ENCODE measurements at regions of chr18 and their contacts with region 1.

Region 1: GRCh38 chr18:10182009-10182624 is 268.3 kb downstream of the VAPA start:
- DNase-seq: no peak
- ATAC-seq: no peak
- H3K4me3 ChIP-seq: no peak overlapping the region
- H3K4me3 Mint-ChIP-seq: no peak overlapping the region
- H3K27ac ChIP-seq: no peak overlapping the region
- H3K27ac Mint-ChIP-seq: no peak overlapping the region
- H3K4me1 ChIP-seq: no peaks in the 10 kb centered on the region
- H3K4me1 Mint-ChIP-seq: peaks cover 8% of the 10 kb centered on the region
- H3K27me3 ChIP-seq: no peaks in the 10 kb centered on the region
- H3K27me3 Mint-ChIP-seq: no peaks in the 10 kb centered on the region
- CTCF ChIP-seq: no peak

Region 2: GRCh38 chr18:10169064-10169562 is 13.0 kb before region 1 on chr18:
- CTCF ChIA-PET with region 1: no interaction called
- POLR2A ChIA-PET with region 1: no interaction called
- intact Hi-C with region 1: no loop called
- DNase-seq: no peak
- ATAC-seq: no peak
- H3K4me3 ChIP-seq: no peak overlapping the region
- H3K4me3 Mint-ChIP-seq: no peak overlapping the region
- H3K27ac ChIP-seq: no peak overlapping the region
- H3K27ac Mint-ChIP-seq: no peak overlapping the region
- H3K4me1 ChIP-seq: no peaks in the 10 kb centered on the region
- H3K4me1 Mint-ChIP-seq: no peaks in the 10 kb centered on the region
- H3K27me3 ChIP-seq: no peaks in the 10 kb centered on the region
- H3K27me3 Mint-ChIP-seq: no peaks in the 10 kb centered on the region
- CTCF ChIP-seq: no peak

Region 3: GRCh38 chr18:10500038-10500437 is 317.9 kb after region 1 on chr18:
- CTCF ChIA-PET with region 1: no interaction called
- POLR2A ChIA-PET with region 1: no interaction called
- intact Hi-C with region 1: loop called in 1 of 2 experiments (anchors 5 kb)
- DNase-seq: no peak
- ATAC-seq: no peak
- H3K4me3 ChIP-seq: no peak overlapping the region
- H3K4me3 Mint-ChIP-seq: no peak overlapping the region
- H3K27ac ChIP-seq: no peak overlapping the region
- H3K27ac Mint-ChIP-seq: no peak overlapping the region
- H3K4me1 ChIP-seq: no peaks in the 10 kb centered on the region
- H3K4me1 Mint-ChIP-seq: peaks cover 8% of the 10 kb centered on the region
- H3K27me3 ChIP-seq: no peaks in the 10 kb centered on the region
- H3K27me3 Mint-ChIP-seq: peaks cover 6% of the 10 kb centered on the region
- CTCF ChIP-seq: no peak

Measured in CD8-positive, alpha-beta T cell (primary cell).